ENCODE measurements at regions of chr3 and their contacts with region 1.

Region 1: DNA sequence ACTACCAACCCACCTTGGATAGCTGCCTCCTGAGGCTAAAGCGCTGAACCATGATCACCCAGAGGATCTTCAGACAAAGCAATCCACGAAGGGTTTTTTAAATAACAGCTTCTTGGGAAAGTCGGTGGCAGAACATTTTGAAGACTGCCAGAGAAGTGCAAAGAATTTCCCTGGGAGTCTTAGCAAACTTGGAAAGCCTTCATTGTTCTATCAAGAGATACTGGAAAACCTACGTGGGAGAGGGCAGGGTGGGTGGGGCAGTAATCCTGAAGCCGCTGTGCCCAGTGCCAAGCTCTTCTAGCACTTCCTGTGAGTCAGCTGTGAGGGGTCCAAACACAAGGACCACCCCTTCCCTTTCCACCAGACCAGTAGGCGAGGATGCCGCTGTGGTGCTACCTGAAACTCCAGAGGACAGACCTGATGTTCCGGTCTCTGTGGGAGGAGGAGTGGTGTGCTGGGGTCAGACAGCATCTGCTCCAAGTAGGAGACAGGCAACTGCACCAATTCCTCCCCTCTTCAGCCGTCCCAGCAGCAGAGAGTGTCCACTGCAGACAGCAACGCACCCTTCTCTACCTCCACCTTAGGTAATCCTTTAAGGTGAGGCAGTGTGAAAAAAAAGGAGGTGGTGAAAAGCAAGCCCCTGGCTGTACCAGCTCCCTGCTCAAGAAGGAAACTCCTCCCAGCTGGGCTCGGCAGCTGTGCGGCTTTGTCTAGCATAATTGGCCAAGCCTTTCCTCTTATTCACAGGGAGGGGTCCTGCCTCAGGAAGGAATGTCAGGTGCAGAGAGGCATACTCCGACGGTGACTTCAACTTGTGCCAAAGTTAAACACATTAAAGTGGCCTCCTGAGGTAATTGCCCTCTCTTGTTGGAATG is 99.0 kb downstream of the TMCC1 start:
- DNase-seq: peak; percentile 88
- ATAC-seq: peak; percentile 87
- H3K4me3 ChIP-seq: peak overlapping the region; percentile 44 to 60
- H3K27ac ChIP-seq: peak overlapping the region; percentile 61
- H3K4me1 ChIP-seq: peaks cover 45 to 59% of the 10 kb centered on the region in 2 experiments
- H3K27me3 ChIP-seq: no peaks in the 10 kb centered on the region
- CTCF ChIP-seq: no peak
- POLR2A ChIP-seq: no peak
- RAD21 ChIP-seq: no peak

Region 2: GRCh38 chr3:129663026-129663446 is 131.5 kb before region 1 on chr3:
- CTCF ChIA-PET with region 1: no interaction called
- POLR2A ChIA-PET with region 1: interaction called, 3 read pairs
- RAD21 ChIA-PET with region 1: no interaction called
- intact Hi-C with region 1: loop called (anchors 2 kb)
- DNase-seq: peak; percentile 93
- ATAC-seq: peak; percentile 92
- H3K4me3 ChIP-seq: peak overlapping the region; percentile 6 to 43; a peak in 2 of 4 replicates
- H3K27ac ChIP-seq: peak overlapping the region; percentile 79
- H3K4me1 ChIP-seq: peaks cover 80 to 93% of the 10 kb centered on the region in 2 experiments
- H3K27me3 ChIP-seq: no peaks in the 10 kb centered on the region
- CTCF ChIP-seq: no peak
- POLR2A ChIP-seq: no peak
- RAD21 ChIP-seq: peak; percentile 49; the same call in 1 of the 2 replicates

Region 3: GRCh38 chr3:129824926-129825541 is 30.5 kb after region 1 on chr3:
- CTCF ChIA-PET with region 1: no interaction called
- POLR2A ChIA-PET with region 1: no interaction called
- RAD21 ChIA-PET with region 1: no interaction called
- intact Hi-C with region 1: no loop called
- DNase-seq: peak; percentile 58
- ATAC-seq: peak; percentile 82
- H3K4me3 ChIP-seq: no peak overlapping the region
- H3K27ac ChIP-seq: no peak overlapping the region
- H3K4me1 ChIP-seq: peaks cover 0 to 11% of the 10 kb centered on the region in 2 experiments; a peak in 3 of 4 replicates
- H3K27me3 ChIP-seq: no peaks in the 10 kb centered on the region
- CTCF ChIP-seq: peak; percentile 59 to 94 (median 80)
- POLR2A ChIP-seq: no peak
- RAD21 ChIP-seq: peak; percentile 96